ENCODE measurements at regions of chr2 and their contacts with region 1.

Region 1: DNA sequence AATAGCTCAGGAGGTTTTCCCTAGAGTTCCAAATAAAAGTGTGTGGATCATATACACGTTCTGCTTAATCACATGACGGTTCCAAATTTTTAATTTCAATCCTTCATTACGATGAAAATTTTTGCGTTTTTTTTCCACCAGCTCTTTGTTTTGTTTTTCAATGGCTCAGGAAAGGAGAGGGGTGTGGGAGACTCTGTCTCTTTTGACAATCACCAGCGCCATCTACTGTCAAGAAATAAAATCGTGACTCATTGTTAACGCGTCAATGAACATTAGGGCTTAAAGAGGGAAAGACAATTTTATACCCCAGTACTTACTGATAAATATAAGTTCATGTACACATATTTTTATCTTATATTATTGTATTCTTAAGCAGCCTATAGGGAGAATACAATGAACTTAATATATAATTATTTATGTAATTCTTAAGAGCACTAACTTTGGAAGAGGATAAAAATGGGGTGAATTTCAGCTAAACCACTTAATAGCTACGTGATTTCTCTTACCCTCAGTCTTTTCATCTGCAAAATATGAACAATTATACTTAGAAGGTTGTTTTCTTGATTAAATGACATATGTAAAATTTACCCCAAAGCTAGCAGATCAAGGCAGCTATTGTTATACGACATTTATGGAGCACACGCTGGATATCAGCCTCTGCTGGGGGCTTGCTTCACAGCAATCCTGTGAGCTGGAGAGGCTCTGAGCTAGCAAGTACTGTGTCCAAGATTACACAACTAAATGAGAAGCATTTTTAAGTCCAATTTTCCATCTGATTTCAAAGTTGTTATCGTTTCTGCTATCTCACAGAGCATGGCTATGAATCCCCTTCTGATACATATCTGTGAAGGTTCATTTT is 47.4 kb upstream of the RMDN2 start:
- DNase-seq: no peak
- H3K4me3 ChIP-seq: no peak overlapping the region
- CTCF ChIP-seq: peak; percentile 38

Region 2: DNA sequence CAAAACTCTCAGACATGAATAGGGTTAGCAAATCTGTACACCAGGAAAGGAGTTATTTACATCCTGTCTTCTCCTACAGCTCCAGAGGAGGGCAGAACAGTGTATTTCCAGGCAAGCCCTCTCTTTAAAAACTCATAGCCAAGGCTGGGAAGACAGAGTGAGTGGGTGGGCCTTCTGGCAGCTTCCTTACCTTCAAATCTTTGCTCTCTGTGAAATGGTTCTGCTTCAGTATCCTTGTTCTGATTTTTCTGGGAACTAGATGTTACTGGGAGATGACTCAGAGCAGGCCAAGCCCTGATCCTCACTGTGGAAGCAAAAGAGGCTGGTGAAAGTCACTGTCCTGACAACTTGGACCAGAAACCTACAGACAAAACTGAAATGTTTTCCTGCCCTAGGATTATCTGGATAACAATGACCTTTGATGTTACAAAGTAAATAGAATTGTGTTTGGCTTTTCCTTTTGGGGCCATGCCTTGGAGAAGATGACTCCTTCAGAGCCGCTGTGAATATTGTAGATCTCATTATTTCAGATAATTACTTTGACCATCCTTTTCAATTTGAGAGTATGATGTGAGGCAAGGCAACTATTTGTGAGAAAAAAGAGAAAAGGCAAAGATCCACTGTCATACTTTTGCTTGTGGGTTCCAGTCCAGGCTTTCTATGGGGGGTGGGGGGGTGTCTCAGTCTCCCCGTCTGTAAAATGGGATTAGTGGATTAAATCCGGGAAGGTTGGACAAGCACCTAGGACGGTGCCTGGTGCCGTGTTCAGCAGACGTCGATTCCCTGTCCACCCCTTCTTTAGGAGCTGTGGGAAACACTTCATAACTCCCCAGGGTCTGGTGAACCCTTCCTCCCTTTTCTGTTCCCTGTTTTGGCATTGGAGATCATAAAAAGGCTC is 533.9 kb before region 1 on chr2:
- CTCF ChIA-PET with region 1: interaction called, 12 read pairs
- POLR2A ChIA-PET with region 1: no interaction called
- DNase-seq: no peak
- H3K4me3 ChIP-seq: peak overlapping the region; percentile 66
- CTCF ChIP-seq: peak; percentile 38

Region 3: GRCh38 chr2:37635504-37636380 is 241.9 kb before region 1 on chr2:
- CTCF ChIA-PET with region 1: interaction called, 13 read pairs
- POLR2A ChIA-PET with region 1: interaction called, 3 read pairs
- DNase-seq: no peak
- H3K4me3 ChIP-seq: no peak overlapping the region
- CTCF ChIP-seq: no peak

Region 4: GRCh38 chr2:37672104-37672869 is 205.4 kb before region 1 on chr2:
- CTCF ChIA-PET with region 1: interaction called, 36 read pairs
- POLR2A ChIA-PET with region 1: interaction called, 4 read pairs
- DNase-seq: peak; percentile 75
- H3K4me3 ChIP-seq: peak overlapping the region; percentile 91
- CTCF ChIP-seq: no peak

Region 5: DNA sequence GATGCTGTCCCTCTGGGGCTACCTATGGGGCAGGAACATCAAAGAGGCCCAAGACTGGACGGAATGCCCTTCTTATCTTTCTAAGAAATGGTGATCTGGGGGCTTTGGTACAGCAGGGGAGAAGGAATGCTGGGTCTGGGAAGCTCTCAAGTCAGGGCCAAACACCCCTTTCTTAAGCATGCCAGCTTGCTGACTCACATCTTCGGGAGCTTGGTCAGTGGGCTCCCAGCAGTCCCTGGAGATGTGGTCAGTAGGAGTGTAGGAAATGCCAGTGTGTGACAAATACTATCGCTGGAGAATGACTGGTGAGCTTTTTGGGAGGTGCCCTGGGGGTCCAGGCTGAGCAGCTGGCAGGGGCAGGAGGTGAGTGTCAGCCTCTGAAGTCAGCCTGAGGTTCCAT is 101.2 kb before region 1 on chr2:
- CTCF ChIA-PET with region 1: interaction called, 58 read pairs
- POLR2A ChIA-PET with region 1: no interaction called
- DNase-seq: peak; percentile 87
- H3K4me3 ChIP-seq: no peak overlapping the region
- CTCF ChIP-seq: no peak

Region 6: GRCh38 chr2:37837628-37838328 is 39.9 kb before region 1 on chr2:
- CTCF ChIA-PET with region 1: interaction called, 141 read pairs
- POLR2A ChIA-PET with region 1: no interaction called
- DNase-seq: no peak
- H3K4me3 ChIP-seq: no peak overlapping the region
- CTCF ChIP-seq: no peak

Measured in AG04449 (cell line).